CD14-positive monocyte (primary cell): ENCODE measurements at regions of chr22 and their contacts with region 1.

Region 1: GRCh38 chr22:37267135-37267587 is 15.1 kb upstream of the CYTH4 start:
- DNase-seq: peak in 2 of 3 donors; percentile 43 to 55
- H3K4me3 ChIP-seq: peak overlapping the region; percentile 21 to 82 (median 57)
- H3K4me3 Mint-ChIP-seq: peak overlapping the region; percentile 77 to 87
- H3K27ac ChIP-seq: peak overlapping the region; percentile 89 to 94
- H3K27ac Mint-ChIP-seq: peak overlapping the region; percentile 95 to 98 (median 97)
- H3K4me1 ChIP-seq: peaks cover 57 to 58% of the 10 kb centered on the region in 2 donors
- H3K4me1 Mint-ChIP-seq: peaks cover 56% of the 10 kb centered on the region
- H3K27me3 ChIP-seq: no peaks in the 10 kb centered on the region
- H3K27me3 Mint-ChIP-seq: peaks cover 2 to 15% (median 7%) of the 10 kb centered on the region in 3 donors
- CTCF ChIP-seq: peak; percentile 99

Region 2: DNA sequence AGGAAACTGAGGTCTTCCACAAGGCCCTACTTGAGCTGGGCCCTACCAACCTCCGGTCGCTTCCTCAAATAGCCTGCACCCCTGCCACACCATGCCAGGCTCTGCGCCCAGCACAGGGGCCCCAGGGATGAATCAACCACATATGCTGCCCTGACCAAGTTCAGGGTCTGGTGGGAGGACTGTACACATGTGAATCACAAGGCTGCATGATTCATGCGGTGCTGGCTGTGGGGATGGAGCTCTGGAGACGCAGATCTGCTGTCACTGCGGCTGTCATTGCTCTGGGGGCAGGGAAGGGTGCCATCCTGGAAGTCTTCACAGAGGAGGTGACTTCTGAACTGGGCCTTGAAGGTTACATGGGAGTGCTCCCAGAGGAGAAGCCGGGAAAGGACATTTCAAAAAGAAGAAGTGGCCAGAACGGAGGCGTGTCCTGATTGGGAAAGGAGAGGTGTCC is 36.7 kb after region 1 on chr22:
- intact Hi-C with region 1: loop called in 1 of 2 experiments (anchors 5 kb)
- DNase-seq: peak; percentile 96 to 99 (median 97)
- H3K4me3 ChIP-seq: peak overlapping the region in 1 of 3 experiments; percentile 16
- H3K4me3 Mint-ChIP-seq: peak overlapping the region in 1 of 2 donors; percentile 19
- H3K27ac ChIP-seq: peak overlapping the region; percentile 96
- H3K27ac Mint-ChIP-seq: peak overlapping the region; percentile 87 to 99 (median 97)
- H3K4me1 ChIP-seq: peaks cover 100% of the 10 kb centered on the region in 2 donors
- H3K4me1 Mint-ChIP-seq: peaks cover 97% of the 10 kb centered on the region
- H3K27me3 ChIP-seq: no peaks in the 10 kb centered on the region
- H3K27me3 Mint-ChIP-seq: peaks cover 0 to 4% (median 2%) of the 10 kb centered on the region in 3 donors
- CTCF ChIP-seq: no peak

Region 3: DNA sequence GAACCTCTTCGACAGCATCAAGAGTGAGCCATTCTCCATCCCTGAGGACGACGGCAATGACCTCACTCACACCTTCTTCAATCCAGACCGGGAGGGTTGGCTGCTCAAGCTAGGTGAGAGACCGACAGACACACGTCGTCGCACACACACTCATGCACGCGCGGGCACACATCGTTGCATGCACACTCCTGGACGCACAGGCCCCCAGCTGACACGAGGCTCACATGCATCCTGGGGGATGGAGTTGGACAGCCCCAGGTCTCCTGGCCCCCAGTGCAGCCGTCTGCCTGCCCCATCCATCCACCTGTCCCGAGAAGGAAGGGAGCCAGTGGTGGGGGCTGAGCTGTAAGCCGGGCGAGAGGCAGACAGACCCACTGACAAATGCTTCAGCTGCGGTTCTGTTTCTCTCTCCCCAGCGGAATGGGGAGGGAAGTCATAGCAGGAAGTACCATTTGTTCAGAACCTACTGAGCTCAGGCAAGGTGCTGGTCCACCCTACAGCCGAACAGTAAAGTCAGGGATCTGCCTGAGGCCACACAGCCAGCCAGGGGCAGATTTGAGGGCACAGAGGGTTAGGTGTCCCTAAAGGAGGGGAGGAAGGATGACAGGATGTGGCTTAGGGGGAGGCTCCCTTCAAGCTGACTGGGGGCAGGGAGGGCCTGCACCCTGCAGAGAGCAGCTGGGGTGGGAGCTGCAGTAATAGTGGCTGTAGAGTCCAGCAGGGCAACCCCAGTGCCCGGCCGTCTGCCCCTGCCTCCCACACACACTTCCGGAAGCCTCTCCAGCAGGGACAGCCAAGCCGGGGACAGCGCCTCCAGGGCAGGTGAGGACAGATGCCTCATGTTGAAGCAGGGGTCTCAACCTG is 42.3 kb after region 1 on chr22:
- intact Hi-C with region 1: loop called in 1 of 2 experiments (anchors 2 kb)
- DNase-seq: peak; percentile 54 to 61 (median 56)
- H3K4me3 ChIP-seq: peak overlapping the region in 1 of 3 experiments; percentile 50
- H3K4me3 Mint-ChIP-seq: peak overlapping the region; percentile 56 to 72
- H3K27ac ChIP-seq: peak overlapping the region; percentile 95 to 96
- H3K27ac Mint-ChIP-seq: peak overlapping the region; percentile 95 to 98 (median 98)
- H3K4me1 ChIP-seq: peaks cover 100% of the 10 kb centered on the region in 2 donors
- H3K4me1 Mint-ChIP-seq: peaks cover 99% of the 10 kb centered on the region
- H3K27me3 ChIP-seq: no peaks in the 10 kb centered on the region
- H3K27me3 Mint-ChIP-seq: peaks cover 0 to 6% (median 0%) of the 10 kb centered on the region in 3 donors
- CTCF ChIP-seq: no peak